PC-9 (cell line): ENCODE measurements at regions of chr21 and their contacts with region 1.

Region 1: DNA sequence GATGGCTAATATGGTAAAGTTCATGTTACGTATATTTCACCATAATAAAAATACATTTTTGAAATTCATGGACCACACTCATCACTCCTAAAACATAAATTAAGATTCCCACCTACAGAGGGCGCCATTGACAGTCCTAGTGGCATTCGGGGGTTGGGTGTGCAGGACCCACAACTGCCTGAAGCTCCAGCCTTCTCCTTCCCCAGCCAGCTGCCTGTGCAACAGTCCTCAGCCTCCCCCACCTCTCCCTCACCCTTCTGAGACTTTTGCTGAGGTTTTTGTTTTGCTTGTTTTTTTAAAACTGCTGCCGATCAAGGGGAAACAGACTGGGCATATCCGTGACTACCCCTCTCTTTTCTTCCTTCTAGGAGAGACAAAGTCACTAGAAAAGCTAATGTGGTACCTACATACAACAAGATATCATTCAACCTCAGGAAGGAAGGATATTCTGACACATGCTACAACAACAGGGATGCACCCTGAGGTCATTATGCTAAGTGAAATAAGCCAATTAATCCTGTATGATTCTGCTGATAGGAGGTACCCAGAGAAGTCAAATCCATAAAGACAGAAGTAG is 9.2 kb upstream of the EVA1C start:
- DNase-seq: peak in 1 of 2 experiments; percentile 36
- H3K4me3 ChIP-seq: no peak overlapping the region
- H3K27ac ChIP-seq: no peak overlapping the region
- H3K4me1 ChIP-seq: no peaks in the 10 kb centered on the region
- H3K27me3 ChIP-seq: no peaks in the 10 kb centered on the region
- CTCF ChIP-seq: peak; percentile 65

Region 2: GRCh38 chr21:33479679-33480480 is 1076.6 kb after region 1 on chr21 and contains the start of gene TMEM50B:
- CTCF ChIA-PET with region 1: interaction called, 10 read pairs
- POLR2A ChIA-PET with region 1: no interaction called
- intact Hi-C with region 1: no loop called
- DNase-seq: peak; percentile 80 to 90
- H3K4me3 ChIP-seq: peak within 1 kb of the TSS; percentile 86
- H3K27ac ChIP-seq: peak within 1 kb of the TSS; percentile 43
- H3K4me1 ChIP-seq: 0 out of 2 replicates have a peak, but pooled peaks cover 4% of the 10 kb centered on the region
- H3K27me3 ChIP-seq: no peaks in the 10 kb centered on the region
- CTCF ChIP-seq: no peak
- total RNA-seq, gene TMEM50B: 11.7 and 14.2 TPM in 2 replicates